K562 (cell line): ENCODE measurements at regions of chr16 and their contacts with region 1.

Region 1: GRCh38 chr16:57300387-57301125 is 16.1 kb upstream of the PLLP start:
- DNase-seq: peak; percentile 96 to 98 (median 97)
- ATAC-seq: peak; percentile 92
- H3K4me3 ChIP-seq: peak overlapping the region; percentile 45
- H3K27ac ChIP-seq: peak overlapping the region; percentile 75
- H3K4me1 ChIP-seq: peaks cover 15 to 19% of the 10 kb centered on the region in 2 experiments; a peak in 4 of 5 replicates
- H3K27me3 ChIP-seq: peaks cover 0 to 5% of the 10 kb centered on the region in 2 experiments; a peak in 2 of 5 replicates
- CTCF ChIP-seq: peak; percentile 96 to 99 (median 99)
- EP300 ChIP-seq: peak; percentile 59
- POLR2A ChIP-seq: no peak
- RAD21 ChIP-seq: peak; percentile 99

Region 2: DNA sequence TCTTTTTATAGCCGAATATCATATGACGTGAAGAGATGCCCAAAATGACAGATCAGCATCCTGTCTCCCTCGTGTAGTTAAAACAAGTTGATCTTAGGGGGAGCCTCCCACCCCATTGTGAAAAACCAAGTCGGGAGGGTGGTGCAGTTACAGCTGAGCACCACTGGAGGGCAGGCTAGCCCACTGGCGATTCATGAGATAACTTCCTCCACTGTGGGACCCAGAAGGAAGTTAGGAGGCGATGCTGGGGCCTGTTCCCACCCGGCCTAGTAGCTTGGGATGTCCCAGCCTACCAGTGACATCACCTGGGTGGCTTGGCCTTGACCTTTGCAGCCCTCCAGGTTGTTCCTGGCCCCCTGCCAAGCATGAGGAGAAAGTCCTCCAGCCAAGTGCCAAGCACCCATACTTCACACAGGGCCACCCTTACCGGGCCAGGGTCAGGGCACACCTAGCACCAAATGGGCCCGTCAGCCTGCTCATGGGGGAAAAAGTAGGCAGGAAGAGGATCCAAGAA is 216.2 kb before region 1 on chr16:
- CTCF ChIA-PET with region 1: no interaction called
- POLR2A ChIA-PET with region 1: no interaction called
- in situ Hi-C with region 1: no loop called
- intact Hi-C with region 1: loop called (anchors 1 kb)
- DNase-seq: peak; percentile 82 to 86 (median 84)
- ATAC-seq: peak; percentile 91
- H3K4me3 ChIP-seq: no peak overlapping the region
- H3K27ac ChIP-seq: no peak overlapping the region
- H3K4me1 ChIP-seq: no peaks in the 10 kb centered on the region; a peak in 1 of 5 replicates
- H3K27me3 ChIP-seq: peaks cover 7 to 24% of the 10 kb centered on the region in 2 experiments; a peak in 4 of 5 replicates
- CTCF ChIP-seq: peak; percentile 93 to 97 (median 96)
- EP300 ChIP-seq: no peak
- POLR2A ChIP-seq: no peak
- RAD21 ChIP-seq: peak; percentile 78 to 92

Region 3: DNA sequence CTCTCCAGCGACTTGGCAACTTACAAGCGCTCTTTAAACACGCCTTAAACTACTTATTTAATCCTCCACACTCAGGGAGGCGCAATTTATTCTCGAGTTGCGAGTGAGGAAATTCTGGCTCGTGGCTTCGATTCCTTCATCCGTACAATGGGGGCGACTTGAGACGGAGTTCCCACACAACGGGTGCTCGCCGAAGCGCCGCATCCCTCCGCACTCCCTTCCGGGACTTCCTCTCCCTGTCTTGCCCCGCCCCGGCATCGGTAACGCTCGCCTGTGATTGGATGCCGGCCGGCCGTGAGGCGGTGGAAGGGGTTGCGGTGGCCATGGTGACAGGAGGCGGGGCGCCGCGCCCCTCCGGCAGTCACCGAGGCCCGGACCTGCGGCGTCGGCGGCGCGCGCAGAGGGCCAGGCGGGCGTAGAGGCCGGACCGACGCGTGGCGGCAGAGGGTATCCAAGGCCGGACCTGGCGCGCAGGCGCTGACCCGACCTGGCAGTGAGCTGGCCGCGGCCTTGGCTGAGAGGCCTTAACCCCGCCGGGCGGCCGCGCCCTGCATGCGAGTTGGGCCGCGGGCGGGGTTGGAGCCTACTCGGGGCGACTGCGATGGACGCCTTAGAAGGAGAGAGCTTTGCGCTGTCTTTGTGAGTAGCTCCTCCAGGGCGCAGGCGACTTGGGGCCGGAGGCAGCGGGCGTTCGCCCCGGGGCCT is 55.6 kb before region 1 on chr16 and contains the start of gene ARL2BP:
- CTCF ChIA-PET with region 1: no interaction called
- POLR2A ChIA-PET with region 1: interaction called, 4 read pairs
- in situ Hi-C with region 1: no loop called
- intact Hi-C with region 1: loop called (anchors 1 kb)
- DNase-seq: peak; percentile 97 to 100 (median 100)
- ATAC-seq: peak; percentile 98
- H3K4me3 ChIP-seq: peak within 1 kb of the TSS; percentile 84
- H3K27ac ChIP-seq: peak within 1 kb of the TSS; percentile 79
- H3K4me1 ChIP-seq: peaks cover 7 to 8% of the 10 kb centered on the region in 2 experiments; a peak in 4 of 5 replicates
- H3K27me3 ChIP-seq: no peaks in the 10 kb centered on the region
- CTCF ChIP-seq: peak; percentile 26 to 68 (median 29); a peak in 4 of 6 replicates
- EP300 ChIP-seq: no peak
- POLR2A ChIP-seq: peak; percentile 78
- RAD21 ChIP-seq: peak; percentile 51 to 64
- polyA plus RNA-seq, gene ARL2BP: 16.7 to 17.1 TPM

Region 4: GRCh38 chr16:57422026-57422944 is 121.7 kb after region 1 on chr16:
- CTCF ChIA-PET with region 1: interaction called, 109 read pairs
- POLR2A ChIA-PET with region 1: interaction called, 3 read pairs
- in situ Hi-C with region 1: loop called (anchors 5 kb)
- intact Hi-C with region 1: loop called (anchors 1 kb)
- DNase-seq: peak; percentile 45 to 76 (median 58)
- ATAC-seq: peak; percentile 89
- H3K4me3 ChIP-seq: no peak overlapping the region
- H3K27ac ChIP-seq: peak overlapping the region; percentile 27; the same call in 1 of the 3 replicates
- H3K4me1 ChIP-seq: peaks cover 3 to 4% of the 10 kb centered on the region in 2 experiments; a peak in 4 of 5 replicates
- H3K27me3 ChIP-seq: no peaks in the 10 kb centered on the region
- CTCF ChIP-seq: peak; percentile 84 to 93 (median 93)
- EP300 ChIP-seq: 0 out of 2 replicates have a peak, but pooled peaks have one; percentile 8
- POLR2A ChIP-seq: no peak
- RAD21 ChIP-seq: peak; percentile 74 to 78

Region 5: DNA sequence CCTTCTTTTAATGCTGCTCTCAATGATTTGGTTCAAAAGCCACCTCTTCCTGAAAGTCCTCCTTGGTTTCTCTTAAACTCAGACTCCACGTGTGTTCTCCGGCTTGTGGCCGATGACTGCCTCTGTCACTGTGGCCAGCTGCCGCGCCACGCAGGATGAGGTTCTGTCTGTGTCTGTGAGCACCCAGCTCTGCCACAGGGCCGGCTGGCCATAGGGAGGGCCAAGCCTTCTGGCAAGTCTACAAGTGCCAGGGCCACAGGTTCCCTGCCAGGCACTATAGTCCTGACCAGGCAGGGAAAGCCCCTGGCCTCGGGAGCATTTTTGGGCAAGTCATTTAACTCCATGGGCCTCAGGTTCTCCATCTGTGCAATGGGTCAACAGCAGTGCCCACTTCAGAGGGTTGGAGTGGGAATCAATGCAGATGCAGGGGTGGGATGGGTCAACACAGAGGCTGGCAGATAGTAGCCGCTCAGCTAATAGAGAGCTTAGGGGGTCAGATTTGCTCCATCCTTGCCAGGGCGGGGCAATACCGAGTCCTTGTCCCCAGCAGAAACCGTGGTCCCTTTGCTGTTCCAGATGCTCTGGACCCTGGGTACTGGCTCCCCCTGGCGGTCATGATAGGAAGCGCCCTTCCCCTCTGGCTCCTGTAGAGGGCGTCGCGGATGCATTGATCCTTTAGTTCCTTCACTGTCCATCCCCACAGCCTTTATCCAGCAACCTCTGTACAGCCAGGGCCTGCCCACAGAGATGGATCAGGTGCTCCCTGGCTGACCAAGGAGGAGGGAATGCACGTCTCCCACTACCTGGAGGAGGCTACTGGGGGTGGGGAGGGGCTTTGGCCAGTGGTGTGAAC is 348.3 kb after region 1 on chr16:
- CTCF ChIA-PET with region 1: no interaction called
- POLR2A ChIA-PET with region 1: no interaction called
- in situ Hi-C with region 1: no loop called
- intact Hi-C with region 1: loop called (anchors 5 kb)
- DNase-seq: peak; percentile 88 to 91 (median 90)
- ATAC-seq: peak; percentile 89
- H3K4me3 ChIP-seq: no peak overlapping the region
- H3K27ac ChIP-seq: no peak overlapping the region
- H3K4me1 ChIP-seq: peaks cover 0 to 13% of the 10 kb centered on the region in 2 experiments; a peak in 2 of 5 replicates
- H3K27me3 ChIP-seq: peaks cover 0 to 5% of the 10 kb centered on the region in 2 experiments; a peak in 2 of 5 replicates
- CTCF ChIP-seq: peak; percentile 100
- EP300 ChIP-seq: no peak
- POLR2A ChIP-seq: no peak
- RAD21 ChIP-seq: peak; percentile 99 to 100